ENCODE measurements at regions of chr5 and their contacts with region 1.

Region 1: DNA sequence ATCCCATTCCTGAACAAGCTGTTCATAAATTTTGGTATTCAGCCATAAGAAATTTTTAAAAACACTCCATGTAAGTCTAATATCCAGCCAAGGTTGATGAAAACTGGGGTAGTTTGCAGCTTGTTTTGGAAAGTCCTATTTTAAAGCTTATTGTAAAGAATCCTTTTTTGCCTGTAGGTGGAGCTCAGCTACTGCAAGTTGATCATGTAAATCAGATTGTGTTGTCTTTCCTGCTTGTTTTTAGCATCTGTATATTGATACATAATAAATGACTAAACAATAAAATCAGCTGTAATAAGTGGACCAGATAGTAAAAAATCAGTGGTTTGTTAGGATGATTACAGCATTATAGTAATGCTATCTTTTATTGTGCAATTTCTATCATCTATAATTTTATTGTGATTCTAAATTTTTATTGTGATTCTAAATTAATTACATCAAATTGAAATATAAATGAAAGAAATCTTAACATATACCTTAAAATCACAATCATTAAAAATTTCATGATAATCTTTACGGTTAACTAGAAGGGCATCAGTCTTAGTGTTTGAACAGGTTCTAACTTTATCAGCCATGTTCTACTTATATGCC is 42.4 kb downstream of the CWC27 start:
- DNase-seq: peak; percentile 16
- CTCF ChIP-seq: peak; percentile 43

Region 2: GRCh38 chr5:65076251-65076869 is 265.2 kb after region 1 on chr5:
- in situ Hi-C with region 1: loop called (anchors 25 kb)
- DNase-seq: peak; percentile 41
- CTCF ChIP-seq: no peak

Region 3: GRCh38 chr5:65320253-65320652 is 509.1 kb after region 1 on chr5:
- in situ Hi-C with region 1: no loop called
- DNase-seq: no peak
- CTCF ChIP-seq: no peak